ENCODE measurements at regions of chr2 and their contacts with region 1.

Region 1: GRCh38 chr2:222318026-222318711 is 19.4 kb upstream of the PAX3 start:
- DNase-seq: peak in 3 of 10 donors; percentile 32 to 60 (median 34)
- H3K4me3 ChIP-seq: peak overlapping the region; percentile 12 to 72 (median 52)
- H3K27ac ChIP-seq: peak overlapping the region in 9 of 59 donors; percentile 8 to 84 (median 40)
- H3K27me3 ChIP-seq: peaks cover 0 to 93% (median 55%) of the 10 kb centered on the region in 45 donors
- CTCF ChIP-seq: peak in 52 of 56 donors; percentile 24 to 66 (median 44)

Region 2: GRCh38 chr2:222160944-222161343 is 157.2 kb before region 1 on chr2:
- intact Hi-C with region 1: no loop called
- DNase-seq: no peak
- H3K4me3 ChIP-seq: no peak overlapping the region
- H3K27ac ChIP-seq: no peak overlapping the region
- H3K27me3 ChIP-seq: peaks cover 0 to 64% (median 7%) of the 10 kb centered on the region in 45 donors
- CTCF ChIP-seq: no peak

Region 3: GRCh38 chr2:222424729-222425671 is 106.8 kb after region 1 on chr2:
- intact Hi-C with region 1: loop called in 1 of 2 experiments (anchors 5 kb)
- DNase-seq: peak in 9 of 10 donors; percentile 21 to 73 (median 49)
- H3K4me3 ChIP-seq: peak overlapping the region; percentile 25 to 77 (median 63)
- H3K27ac ChIP-seq: peak overlapping the region in 56 of 59 donors; percentile 19 to 87 (median 80)
- H3K27me3 ChIP-seq: peaks cover 0 to 52% (median 17%) of the 10 kb centered on the region in 45 donors
- CTCF ChIP-seq: no peak

Region 4: DNA sequence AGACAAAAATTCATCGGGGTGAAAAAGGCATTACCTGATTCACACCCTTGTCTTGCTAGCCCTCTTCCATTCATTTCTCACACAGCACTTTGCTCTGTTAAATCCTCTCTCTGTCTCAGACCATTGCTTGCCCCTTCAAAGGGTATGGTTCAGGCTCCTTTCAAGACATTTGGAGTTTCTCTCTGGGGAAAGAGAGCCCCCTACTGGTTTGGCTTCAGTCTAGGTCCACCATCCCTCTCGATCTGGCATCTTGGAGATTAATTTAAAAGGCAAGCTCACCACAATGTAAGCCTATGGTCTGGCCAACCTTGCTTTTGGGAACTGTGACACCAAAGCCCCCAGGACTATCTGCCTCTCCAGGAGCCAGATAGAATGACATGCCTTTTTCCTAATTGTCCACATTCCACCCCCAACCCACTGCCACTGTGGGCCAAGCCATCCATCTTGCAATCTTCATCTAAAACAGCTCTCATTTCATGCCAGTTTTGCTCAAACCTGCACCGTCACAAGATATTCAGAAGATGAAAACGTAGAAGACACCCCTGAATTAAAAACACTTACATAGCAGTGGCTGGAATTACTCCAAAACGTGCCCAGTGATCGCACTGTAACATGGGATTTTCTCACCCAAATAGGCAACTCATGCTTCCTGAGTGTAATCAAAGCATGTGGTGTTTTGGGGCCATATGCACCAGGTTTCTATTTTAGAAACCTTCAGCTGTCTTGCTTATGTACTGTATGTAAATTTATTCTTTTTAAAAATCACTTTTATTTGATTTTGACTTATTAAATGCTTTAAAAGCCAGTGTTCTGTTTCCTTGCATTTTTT is 243.9 kb after region 1 on chr2:
- intact Hi-C with region 1: loop called (anchors 5 kb)
- DNase-seq: peak in 2 of 10 donors; percentile 36 to 53
- H3K4me3 ChIP-seq: no peak overlapping the region
- H3K27ac ChIP-seq: peak overlapping the region in 1 of 59 donors; percentile 11
- H3K27me3 ChIP-seq: peaks cover 0 to 5% (median 0%) of the 10 kb centered on the region in 45 donors
- CTCF ChIP-seq: peak; percentile 29 to 75 (median 54)

Measured in dorsolateral prefrontal cortex (tissue), 120 donors.